Caco-2 (cell line): ENCODE measurements at regions of chr2 and their contacts with region 1.

Region 1: GRCh38 chr2:212777020-212777491 is 238.5 kb upstream of the ERBB4 start:
- DNase-seq: peak; percentile 42 to 59
- H3K4me3 ChIP-seq: no peak overlapping the region
- H3K4me3 Mint-ChIP-seq: peak overlapping the region; percentile 56
- H3K27ac Mint-ChIP-seq: peak overlapping the region; percentile 44
- H3K4me1 ChIP-seq: peaks cover 8% of the 10 kb centered on the region
- H3K4me1 Mint-ChIP-seq: peaks cover 15% of the 10 kb centered on the region
- H3K27me3 ChIP-seq: no peaks in the 10 kb centered on the region; the same call in 1 of the 2 replicates
- H3K27me3 Mint-ChIP-seq: no peaks in the 10 kb centered on the region
- CTCF ChIP-seq: peak; percentile 50 to 67

Region 2: GRCh38 chr2:212686285-212686895 is 90.7 kb before region 1 on chr2:
- CTCF ChIA-PET with region 1: no interaction called
- POLR2A ChIA-PET with region 1: no interaction called
- intact Hi-C with region 1: loop called (anchors 1 kb)
- DNase-seq: peak; percentile 54 to 57
- H3K4me3 ChIP-seq: no peak overlapping the region
- H3K4me3 Mint-ChIP-seq: no peak overlapping the region
- H3K27ac Mint-ChIP-seq: no peak overlapping the region
- H3K4me1 ChIP-seq: no peaks in the 10 kb centered on the region; the same call in 1 of the 2 replicates
- H3K4me1 Mint-ChIP-seq: no peaks in the 10 kb centered on the region
- H3K27me3 ChIP-seq: no peaks in the 10 kb centered on the region
- H3K27me3 Mint-ChIP-seq: peaks cover 3% of the 10 kb centered on the region
- CTCF ChIP-seq: peak; percentile 86 to 89

Region 3: DNA sequence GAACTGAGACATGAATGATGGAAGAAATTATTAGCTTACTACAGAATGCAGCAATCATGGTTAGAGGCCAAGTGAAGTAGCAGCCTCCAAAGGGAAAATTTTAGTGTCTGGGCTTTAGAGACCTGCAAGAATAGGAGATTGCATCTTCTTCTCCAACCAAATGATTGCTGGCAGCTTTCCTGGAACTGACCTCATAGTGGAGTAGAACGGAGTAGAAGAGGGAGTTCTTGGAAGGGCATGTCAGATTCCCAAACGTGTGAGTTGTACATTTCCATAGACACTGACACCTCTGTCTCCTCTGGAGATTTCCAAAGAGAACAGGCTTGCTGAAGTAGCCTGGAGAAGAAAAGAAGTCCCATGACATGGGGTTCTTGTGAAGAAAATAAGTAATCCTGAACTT is 68.7 kb before region 1 on chr2:
- CTCF ChIA-PET with region 1: no interaction called
- POLR2A ChIA-PET with region 1: no interaction called
- intact Hi-C with region 1: no loop called
- DNase-seq: no peak
- H3K4me3 ChIP-seq: no peak overlapping the region
- H3K4me3 Mint-ChIP-seq: no peak overlapping the region
- H3K27ac Mint-ChIP-seq: no peak overlapping the region
- H3K4me1 ChIP-seq: no peaks in the 10 kb centered on the region
- H3K4me1 Mint-ChIP-seq: no peaks in the 10 kb centered on the region
- H3K27me3 ChIP-seq: no peaks in the 10 kb centered on the region
- H3K27me3 Mint-ChIP-seq: peaks cover 3% of the 10 kb centered on the region
- CTCF ChIP-seq: no peak

Region 4: GRCh38 chr2:212863185-212863588 is 86.1 kb after region 1 on chr2:
- CTCF ChIA-PET with region 1: no interaction called
- POLR2A ChIA-PET with region 1: no interaction called
- intact Hi-C with region 1: loop called (anchors 1 kb)
- DNase-seq: peak; percentile 64 to 70
- H3K4me3 ChIP-seq: no peak overlapping the region
- H3K4me3 Mint-ChIP-seq: no peak overlapping the region
- H3K27ac Mint-ChIP-seq: no peak overlapping the region
- H3K4me1 ChIP-seq: no peaks in the 10 kb centered on the region
- H3K4me1 Mint-ChIP-seq: no peaks in the 10 kb centered on the region
- H3K27me3 ChIP-seq: no peaks in the 10 kb centered on the region
- H3K27me3 Mint-ChIP-seq: no peaks in the 10 kb centered on the region
- CTCF ChIP-seq: peak; percentile 57 to 59

Region 5: DNA sequence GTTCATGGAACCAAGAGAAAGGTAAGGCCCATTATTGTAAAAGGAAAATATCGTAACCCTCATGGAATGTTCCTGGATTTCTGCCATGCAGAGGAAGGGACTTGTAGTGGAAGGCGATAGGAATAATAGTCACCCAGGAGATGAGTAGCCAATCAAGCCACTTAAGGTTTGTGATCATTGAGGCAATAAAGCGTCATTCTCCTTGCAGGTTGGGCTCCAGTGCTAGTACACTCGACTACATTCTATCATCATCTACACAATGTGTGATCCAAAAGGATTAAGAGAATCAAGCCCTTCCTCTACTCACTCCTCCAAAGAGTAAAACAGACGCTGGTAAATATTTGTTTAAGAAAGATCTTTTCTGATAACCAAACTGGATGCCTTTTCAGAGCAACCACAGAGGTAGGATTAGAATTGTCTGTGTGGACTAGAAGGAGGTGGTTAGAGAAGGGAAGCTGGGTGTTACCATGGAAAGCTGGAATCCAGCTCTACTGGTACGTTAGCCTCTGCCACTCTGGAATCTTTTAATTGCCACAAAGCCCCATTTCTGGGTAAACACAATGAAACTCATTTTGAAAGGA is 128.7 kb after region 1 on chr2:
- CTCF ChIA-PET with region 1: no interaction called
- POLR2A ChIA-PET with region 1: no interaction called
- intact Hi-C with region 1: loop called (anchors 1 kb)
- DNase-seq: peak; percentile 81 to 85
- H3K4me3 ChIP-seq: no peak overlapping the region
- H3K4me3 Mint-ChIP-seq: peak overlapping the region; percentile 70
- H3K27ac Mint-ChIP-seq: peak overlapping the region; percentile 89
- H3K4me1 ChIP-seq: peaks cover 27% of the 10 kb centered on the region
- H3K4me1 Mint-ChIP-seq: peaks cover 32% of the 10 kb centered on the region
- H3K27me3 ChIP-seq: no peaks in the 10 kb centered on the region
- H3K27me3 Mint-ChIP-seq: no peaks in the 10 kb centered on the region
- CTCF ChIP-seq: no peak

Region 6: DNA sequence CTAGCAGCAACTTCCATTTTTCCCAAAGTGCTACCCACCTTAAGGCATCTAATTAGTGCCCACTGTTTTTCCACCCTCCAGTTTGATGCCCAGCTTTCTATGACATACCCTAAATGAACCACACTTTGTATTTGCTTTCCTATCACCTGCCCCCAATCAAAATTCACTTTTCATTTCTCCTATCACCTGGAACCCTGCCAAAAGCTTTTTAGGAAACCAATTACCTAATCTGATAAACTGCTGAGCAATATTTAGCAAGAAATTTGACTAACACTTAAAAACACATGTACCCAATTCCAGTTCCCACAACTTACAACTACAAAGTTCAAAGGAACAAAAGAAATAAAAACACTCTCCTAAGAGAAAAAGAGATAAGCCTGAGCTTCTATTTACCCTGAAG is 302.7 kb after region 1 on chr2:
- CTCF ChIA-PET with region 1: no interaction called
- POLR2A ChIA-PET with region 1: no interaction called
- intact Hi-C with region 1: loop called (anchors 5 kb)
- DNase-seq: no peak
- H3K4me3 ChIP-seq: no peak overlapping the region
- H3K4me3 Mint-ChIP-seq: no peak overlapping the region
- H3K27ac Mint-ChIP-seq: no peak overlapping the region
- H3K4me1 ChIP-seq: no peaks in the 10 kb centered on the region
- H3K4me1 Mint-ChIP-seq: no peaks in the 10 kb centered on the region
- H3K27me3 ChIP-seq: no peaks in the 10 kb centered on the region
- H3K27me3 Mint-ChIP-seq: no peaks in the 10 kb centered on the region
- CTCF ChIP-seq: no peak